Mammary epithelial cell (primary cell): ENCODE measurements at regions of chr10 and their contacts with region 1.

Region 1: DNA sequence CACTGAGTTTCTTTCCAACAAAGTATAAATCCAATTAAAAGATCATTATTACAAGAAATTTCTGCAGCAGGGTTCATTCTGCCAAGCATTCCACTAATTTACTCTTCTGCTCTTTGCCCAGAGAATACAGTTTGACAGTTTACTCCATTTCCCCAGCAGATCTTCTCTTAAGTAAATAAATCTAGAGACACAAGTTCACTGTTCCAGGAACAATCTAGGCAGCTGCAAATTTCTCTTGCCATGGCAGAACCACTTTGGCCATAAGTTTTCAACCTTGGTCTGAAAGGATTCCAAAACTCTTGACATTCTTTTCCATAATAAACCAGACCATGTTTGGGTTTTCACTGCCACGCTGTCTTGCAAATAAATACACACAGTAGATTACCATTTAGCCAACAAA is 11.5 kb downstream of the RGS10 start:
- DNase-seq: no peak
- H3K4me3 ChIP-seq: no peak overlapping the region
- H3K27ac ChIP-seq: no peak overlapping the region
- H3K4me1 ChIP-seq: peaks cover under 1% of the 10 kb centered on the region
- H3K27me3 ChIP-seq: no peaks in the 10 kb centered on the region
- CTCF ChIP-seq: no peak

Region 2: GRCh38 chr10:119383174-119383856 is 147.8 kb before region 1 on chr10:
- CTCF ChIA-PET with region 1: interaction called, 20 read pairs
- dilution Hi-C with region 1: no loop called
- in situ Hi-C with region 1: no loop called
- intact Hi-C with region 1: no loop called
- DNase-seq: no peak
- H3K4me3 ChIP-seq: no peak overlapping the region
- H3K27ac ChIP-seq: no peak overlapping the region
- H3K4me1 ChIP-seq: no peaks in the 10 kb centered on the region
- H3K27me3 ChIP-seq: no peaks in the 10 kb centered on the region
- CTCF ChIP-seq: no peak